Left ventricle myocardium superior (tissue), 1 donor: ENCODE measurements at regions of chr2 and their contacts with region 1.

Region 1: GRCh38 chr2:217785544-217786045 is 217.2 kb downstream of the TNS1 start:
- DNase-seq: peak; percentile 86
- ATAC-seq: peak; percentile 79

Region 2: GRCh38 chr2:217886720-217887309 is 101.2 kb after region 1 on chr2:
- intact Hi-C with region 1: loop called (anchors 5 kb)
- DNase-seq: peak; percentile 70
- ATAC-seq: peak; percentile 46

Region 3: DNA sequence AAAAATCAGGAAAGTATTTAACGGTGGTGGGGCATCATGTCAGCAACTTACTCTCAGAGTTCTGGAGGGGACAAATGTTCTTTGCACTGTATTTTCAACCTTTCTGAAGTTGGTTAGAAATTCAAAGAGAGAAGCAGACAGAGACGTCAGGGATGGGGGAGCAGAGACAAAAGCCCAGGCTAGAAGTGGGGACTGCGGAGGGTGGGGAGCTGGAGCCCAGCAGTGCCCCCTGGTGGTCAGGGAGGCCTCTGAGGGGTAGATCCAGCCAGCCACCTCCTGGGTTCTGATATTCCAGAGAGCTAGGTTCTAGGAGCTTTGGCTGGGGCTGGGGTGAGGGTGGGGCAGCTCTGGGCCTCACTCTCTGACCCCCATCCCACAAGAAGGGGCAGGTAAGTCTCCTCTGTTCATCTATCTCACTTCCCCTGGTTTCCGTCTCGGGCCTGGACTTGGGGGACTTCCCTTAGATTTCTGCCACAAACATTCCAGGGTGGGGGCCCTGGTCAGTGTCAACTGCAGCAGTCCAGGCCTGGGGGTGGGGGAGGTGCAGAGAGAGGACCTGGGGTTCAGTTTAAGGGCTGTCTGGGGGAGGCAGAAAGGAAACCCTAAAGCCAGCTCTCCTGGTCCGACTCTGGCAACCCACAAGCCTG is 208.3 kb after region 1 on chr2:
- intact Hi-C with region 1: loop called (anchors 5 kb)
- DNase-seq: peak; percentile 87
- ATAC-seq: peak; percentile 49

Region 4: DNA sequence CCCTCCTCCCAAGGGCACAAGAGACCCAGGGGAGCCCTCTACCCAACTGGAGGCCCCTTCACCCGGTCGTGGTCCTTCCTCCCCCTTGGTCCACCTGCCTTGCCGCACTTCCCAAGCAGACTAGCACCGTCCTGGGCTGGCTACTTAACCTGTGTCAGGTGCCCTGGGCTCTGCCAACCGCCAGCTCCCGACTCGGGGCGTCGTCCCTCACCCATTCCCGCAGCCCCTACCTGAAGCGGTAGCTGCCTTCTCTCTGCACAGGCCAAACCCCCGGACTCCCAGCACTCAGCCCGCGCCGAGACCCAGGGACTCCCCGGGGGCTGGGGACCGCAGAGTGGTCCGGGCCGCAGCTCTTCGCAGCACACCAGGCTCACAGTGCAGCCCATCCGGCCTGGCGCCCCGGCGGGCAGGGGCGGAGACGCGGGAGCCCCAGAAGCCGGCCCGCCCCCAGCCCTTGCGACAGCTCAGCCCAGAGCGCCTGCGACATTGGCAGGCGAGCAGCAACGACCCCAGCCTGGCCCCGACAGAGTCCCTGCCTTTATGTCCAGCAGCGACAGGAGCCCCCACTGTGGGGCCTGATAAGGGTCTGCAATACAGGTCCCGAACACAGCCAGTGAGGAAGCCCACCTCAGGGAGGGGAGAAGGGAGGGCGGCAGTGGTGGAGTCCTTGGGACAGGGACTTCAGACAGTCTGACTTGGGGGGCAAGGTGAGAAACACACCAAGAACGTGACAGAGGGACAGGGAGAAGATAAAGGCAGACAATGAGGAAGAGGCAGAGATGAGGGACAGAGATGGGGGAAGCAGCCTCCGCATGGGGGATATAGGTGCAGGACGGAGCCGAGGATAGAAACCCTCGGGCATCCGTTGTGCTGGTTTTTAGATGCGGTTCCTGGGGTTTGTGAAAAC is 248.2 kb after region 1 on chr2:
- intact Hi-C with region 1: loop called (anchors 10 kb)
- DNase-seq: no peak
- ATAC-seq: peak; percentile 4